ENCODE measurements at regions of chr4 and their contacts with region 1.

Region 1: DNA sequence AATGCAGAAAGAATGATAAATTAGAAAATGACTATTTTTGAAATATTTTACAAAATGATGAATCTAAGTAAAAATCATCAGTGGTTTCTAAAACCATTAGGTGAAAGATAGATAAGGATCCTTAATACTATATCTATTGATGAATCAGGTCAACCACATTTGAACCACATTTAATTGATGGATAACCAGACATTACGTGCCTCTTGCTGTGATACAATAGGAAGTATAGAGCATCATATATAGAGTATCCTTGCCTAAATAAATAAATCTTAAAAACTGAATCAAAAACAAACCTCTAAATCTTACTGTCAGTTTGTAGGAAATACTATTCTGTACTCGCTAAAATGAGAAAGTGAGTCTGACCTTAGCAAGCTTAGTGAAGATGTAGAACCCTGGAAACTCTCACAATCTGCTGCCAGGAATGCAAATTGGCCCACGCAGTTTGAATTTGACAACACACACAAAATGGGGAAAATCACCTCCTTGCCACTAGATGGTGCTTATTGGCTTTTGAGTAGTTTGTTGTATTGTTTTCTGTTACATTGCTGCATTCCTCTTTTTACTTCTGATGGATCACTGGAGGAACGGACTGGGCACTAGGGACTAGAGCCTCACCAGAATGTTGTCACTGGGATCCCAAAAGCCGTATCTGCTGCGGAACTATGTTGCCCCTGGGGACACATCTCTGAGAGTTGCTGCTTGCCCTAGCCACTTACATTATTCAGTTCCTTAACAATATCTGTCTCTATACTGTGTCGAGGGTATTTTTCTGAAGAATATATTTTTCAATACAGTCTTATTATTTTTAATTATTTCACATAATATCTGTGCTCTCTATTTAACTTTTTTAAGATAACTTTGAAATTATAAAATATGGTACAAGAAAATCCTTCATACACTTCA is 25.4 kb upstream of the SLAIN2 start:
- DNase-seq: no peak
- H3K4me3 ChIP-seq: no peak overlapping the region
- H3K27ac ChIP-seq: no peak overlapping the region
- H3K4me1 ChIP-seq: peaks cover 0 to 5% (median 0%) of the 10 kb centered on the region in 4 donors
- H3K27me3 ChIP-seq: no peaks in the 10 kb centered on the region
- CTCF ChIP-seq: peak; percentile 55 to 69 (median 57)
- EP300 ChIP-seq: no peak
- POLR2A ChIP-seq: no peak

Region 2: GRCh38 chr4:48483006-48483776 is 167.2 kb after region 1 on chr4 and contains the start of gene SLC10A4:
- in situ Hi-C with region 1: loop called in 1 of 4 experiments (anchors 25 kb)
- intact Hi-C with region 1: no loop called
- DNase-seq: no peak
- H3K4me3 ChIP-seq: peak within 1 kb of the TSS in 3 of 4 donors; percentile 10 to 47 (median 27)
- H3K27ac ChIP-seq: no peak within 1 kb of the TSS
- H3K4me1 ChIP-seq: peaks cover 0 to 9% (median 8%) of the 10 kb centered on the region in 4 donors
- H3K27me3 ChIP-seq: peaks cover 84% of the 10 kb centered on the region
- CTCF ChIP-seq: no peak
- EP300 ChIP-seq: no peak
- POLR2A ChIP-seq: no peak
- total RNA-seq, gene SLC10A4: 1.2 to 6.0 TPM in 2 of 4 donors, not detected in the others

Measured in transverse colon (tissue), 4 donors.